B cell (primary cell): ENCODE measurements at regions of chr3 and their contacts with region 1.

Region 1: DNA sequence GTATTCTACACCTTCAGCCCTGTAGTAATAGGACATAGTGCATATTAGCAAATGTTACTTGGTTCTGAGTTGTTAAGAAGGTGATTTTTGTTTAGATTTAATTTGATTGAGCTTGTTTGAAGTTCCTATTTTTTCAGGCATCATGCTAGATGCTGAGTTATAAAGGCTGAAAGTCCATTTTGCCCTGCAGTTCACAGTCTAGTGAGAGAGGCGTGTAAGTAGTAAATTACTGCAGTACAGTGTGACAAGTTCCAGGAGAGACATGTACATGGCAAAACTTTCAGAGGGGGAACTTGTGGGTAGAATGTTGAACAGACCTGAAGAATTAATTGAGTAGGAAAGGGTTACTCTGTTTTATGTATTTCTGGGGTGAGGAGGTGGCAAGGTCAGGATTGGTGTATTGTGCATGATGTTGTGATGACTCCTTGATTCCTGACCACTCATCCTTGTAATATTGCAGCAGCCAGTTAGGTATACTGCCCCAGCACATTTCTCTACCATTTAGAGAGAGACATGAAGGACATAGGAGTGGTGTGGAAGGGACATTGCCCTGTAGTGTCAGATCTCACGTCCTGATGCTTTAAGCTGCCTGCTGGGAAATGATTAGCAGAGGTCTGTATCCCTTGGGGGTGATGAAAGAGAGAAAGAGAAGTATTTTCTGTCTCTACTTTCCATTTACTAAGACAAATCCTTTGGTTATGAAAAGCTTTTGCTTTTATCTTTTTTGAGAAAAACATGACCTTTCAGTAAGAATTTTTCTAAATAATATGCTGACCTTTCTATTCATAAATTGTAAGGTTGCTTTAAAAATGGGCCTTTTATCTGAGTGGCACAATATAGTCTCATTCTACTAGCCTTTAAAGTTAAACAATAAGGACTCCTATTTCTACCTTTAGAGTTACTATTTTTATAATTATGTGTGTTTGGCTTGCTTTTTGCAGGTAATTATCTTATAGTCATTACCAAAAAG is 16.9 kb downstream of the SACM1L start:
- DNase-seq: no peak
- ATAC-seq: no peak
- H3K4me3 ChIP-seq: no peak overlapping the region
- H3K4me3 Mint-ChIP-seq: no peak overlapping the region
- H3K27ac ChIP-seq: no peak overlapping the region
- H3K27ac Mint-ChIP-seq: peak overlapping the region; percentile 20
- H3K4me1 ChIP-seq: no peaks in the 10 kb centered on the region
- H3K4me1 Mint-ChIP-seq: peaks cover 19% of the 10 kb centered on the region
- H3K27me3 ChIP-seq: no peaks in the 10 kb centered on the region
- H3K27me3 Mint-ChIP-seq: no peaks in the 10 kb centered on the region
- CTCF ChIP-seq: no peak

Region 2: DNA sequence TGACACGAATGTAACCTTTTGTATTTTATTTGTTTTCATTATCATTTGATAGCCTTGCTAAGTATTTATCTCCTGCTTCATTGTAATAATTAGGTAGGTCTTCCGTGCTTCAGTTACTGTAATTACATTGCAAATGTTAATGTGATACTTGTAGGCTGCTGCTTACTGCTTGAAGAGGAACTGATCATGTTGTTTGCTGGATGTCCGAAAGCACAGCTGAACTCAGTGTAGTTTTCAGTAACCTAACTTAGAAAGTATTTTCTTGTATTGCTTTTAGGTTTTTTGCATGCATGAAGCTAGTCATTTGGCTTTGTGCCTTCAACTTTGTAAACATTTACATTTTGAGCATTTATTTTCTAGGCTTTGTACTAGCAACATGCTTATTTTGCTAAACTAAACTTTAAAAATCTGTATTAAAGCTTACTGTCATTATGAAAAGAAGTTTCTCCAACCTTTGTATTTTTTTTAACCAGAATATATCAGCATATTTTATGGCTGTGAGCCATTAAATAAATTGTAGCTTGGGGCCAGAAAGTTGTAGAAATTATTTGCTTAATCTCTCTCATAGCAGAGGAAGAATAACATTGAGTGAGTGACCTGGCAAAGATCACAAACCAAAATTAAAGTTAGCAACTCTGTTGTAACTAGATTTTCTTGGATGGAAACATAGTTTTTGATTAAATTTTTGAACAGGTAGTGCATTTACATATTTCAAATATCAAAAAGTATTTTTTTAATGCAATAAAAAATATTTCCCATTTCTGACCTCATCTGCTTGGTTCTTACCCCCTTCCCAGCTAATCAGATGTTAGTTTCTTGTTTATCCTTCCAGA is 13.7 kb after region 1 on chr3:
- CTCF ChIA-PET with region 1: interaction called, 3 read pairs
- POLR2A ChIA-PET with region 1: no interaction called
- intact Hi-C with region 1: loop called (anchors 2 kb)
- DNase-seq: no peak
- ATAC-seq: no peak
- H3K4me3 ChIP-seq: no peak overlapping the region
- H3K4me3 Mint-ChIP-seq: no peak overlapping the region
- H3K27ac ChIP-seq: no peak overlapping the region
- H3K27ac Mint-ChIP-seq: no peak overlapping the region
- H3K4me1 ChIP-seq: no peaks in the 10 kb centered on the region
- H3K4me1 Mint-ChIP-seq: no peaks in the 10 kb centered on the region
- H3K27me3 ChIP-seq: no peaks in the 10 kb centered on the region
- H3K27me3 Mint-ChIP-seq: no peaks in the 10 kb centered on the region
- CTCF ChIP-seq: no peak

Region 3: DNA sequence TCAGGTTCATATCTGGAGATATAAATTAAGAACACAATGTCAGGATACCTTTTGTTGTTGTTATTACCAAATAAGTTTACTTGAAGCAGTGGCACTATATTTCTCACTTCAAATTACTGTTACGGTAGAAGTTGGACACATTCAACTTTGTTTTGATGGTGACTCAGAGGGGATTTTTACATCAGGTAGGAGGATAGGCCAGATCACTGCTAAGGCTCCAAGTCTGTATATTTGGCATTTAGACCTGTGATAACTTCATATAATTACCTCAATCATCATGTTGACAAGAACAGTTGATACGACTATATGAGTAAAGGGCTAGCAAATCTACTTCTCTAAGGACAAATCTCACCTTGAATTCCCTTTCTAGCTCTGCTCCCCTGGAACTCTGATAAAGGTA is 120.2 kb after region 1 on chr3:
- CTCF ChIA-PET with region 1: no interaction called
- POLR2A ChIA-PET with region 1: no interaction called
- intact Hi-C with region 1: no loop called
- DNase-seq: no peak
- ATAC-seq: no peak
- H3K4me3 ChIP-seq: no peak overlapping the region
- H3K4me3 Mint-ChIP-seq: no peak overlapping the region
- H3K27ac ChIP-seq: no peak overlapping the region
- H3K27ac Mint-ChIP-seq: no peak overlapping the region
- H3K4me1 ChIP-seq: no peaks in the 10 kb centered on the region
- H3K4me1 Mint-ChIP-seq: no peaks in the 10 kb centered on the region
- H3K27me3 ChIP-seq: no peaks in the 10 kb centered on the region
- H3K27me3 Mint-ChIP-seq: no peaks in the 10 kb centered on the region
- CTCF ChIP-seq: no peak

Region 4: DNA sequence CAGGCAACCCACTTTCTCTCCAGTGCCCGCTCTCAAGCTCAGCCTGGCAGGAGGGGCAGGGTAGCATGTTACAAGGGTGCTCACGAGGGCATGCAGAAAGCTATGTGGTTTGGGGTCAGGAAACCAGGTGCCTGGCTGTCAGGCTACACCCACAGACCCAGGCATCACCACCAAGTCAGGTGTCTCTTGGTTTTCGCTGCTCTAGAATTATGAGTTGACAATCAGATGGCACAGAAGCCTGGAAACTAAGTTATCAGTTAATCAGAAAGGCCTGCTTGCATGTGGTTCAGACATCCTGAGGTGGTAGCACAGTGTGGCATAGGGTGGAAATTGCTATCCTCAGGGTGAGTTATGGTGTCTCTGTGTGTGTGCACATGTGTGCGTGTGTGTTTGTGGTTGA is 164.0 kb after region 1 on chr3:
- CTCF ChIA-PET with region 1: no interaction called
- POLR2A ChIA-PET with region 1: no interaction called
- intact Hi-C with region 1: no loop called
- DNase-seq: peak; percentile 71
- ATAC-seq: peak; percentile 71
- H3K4me3 ChIP-seq: no peak overlapping the region
- H3K4me3 Mint-ChIP-seq: peak overlapping the region; percentile 6
- H3K27ac ChIP-seq: peak overlapping the region in 1 of 2 donors; percentile 36
- H3K27ac Mint-ChIP-seq: peak overlapping the region; percentile 34
- H3K4me1 ChIP-seq: peaks cover 19 to 33% of the 10 kb centered on the region in 2 donors
- H3K4me1 Mint-ChIP-seq: peaks cover 41% of the 10 kb centered on the region
- H3K27me3 ChIP-seq: no peaks in the 10 kb centered on the region
- H3K27me3 Mint-ChIP-seq: no peaks in the 10 kb centered on the region
- CTCF ChIP-seq: no peak